ENCODE measurements at regions of chr5 and their contacts with region 1.

Region 1: GRCh38 chr5:140244525-140245025 is 58.3 kb downstream of the PFDN1 start:
- DNase-seq: peak; percentile 72
- H3K4me3 Mint-ChIP-seq: peak overlapping the region; percentile 38
- H3K27ac Mint-ChIP-seq: no peak overlapping the region
- H3K4me1 Mint-ChIP-seq: peaks cover 42% of the 10 kb centered on the region
- H3K27me3 Mint-ChIP-seq: no peaks in the 10 kb centered on the region

Region 2: DNA sequence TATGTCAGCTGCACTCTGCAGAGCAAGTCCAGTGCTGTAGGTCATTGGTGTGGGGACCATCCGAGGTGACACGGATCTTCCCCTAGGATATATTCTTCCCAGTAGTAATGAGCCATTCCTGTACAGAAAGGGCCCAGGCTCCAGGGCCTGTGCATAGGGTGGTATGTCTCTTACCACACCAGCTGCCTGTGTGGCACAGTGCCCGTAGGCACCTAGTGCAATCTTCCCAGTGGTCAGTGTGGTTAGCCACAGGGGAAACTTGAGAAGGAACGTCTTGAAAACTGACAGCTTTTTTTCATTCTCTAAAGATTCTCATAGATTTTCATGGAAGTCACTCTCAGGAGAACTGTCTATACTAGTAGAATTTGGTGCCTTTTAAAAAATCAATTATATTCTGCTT is 29.7 kb before region 1 on chr5:
- intact Hi-C with region 1: no loop called
- DNase-seq: no peak
- H3K4me3 Mint-ChIP-seq: no peak overlapping the region
- H3K27ac Mint-ChIP-seq: no peak overlapping the region
- H3K4me1 Mint-ChIP-seq: peaks cover 12% of the 10 kb centered on the region
- H3K27me3 Mint-ChIP-seq: no peaks in the 10 kb centered on the region

Region 3: DNA sequence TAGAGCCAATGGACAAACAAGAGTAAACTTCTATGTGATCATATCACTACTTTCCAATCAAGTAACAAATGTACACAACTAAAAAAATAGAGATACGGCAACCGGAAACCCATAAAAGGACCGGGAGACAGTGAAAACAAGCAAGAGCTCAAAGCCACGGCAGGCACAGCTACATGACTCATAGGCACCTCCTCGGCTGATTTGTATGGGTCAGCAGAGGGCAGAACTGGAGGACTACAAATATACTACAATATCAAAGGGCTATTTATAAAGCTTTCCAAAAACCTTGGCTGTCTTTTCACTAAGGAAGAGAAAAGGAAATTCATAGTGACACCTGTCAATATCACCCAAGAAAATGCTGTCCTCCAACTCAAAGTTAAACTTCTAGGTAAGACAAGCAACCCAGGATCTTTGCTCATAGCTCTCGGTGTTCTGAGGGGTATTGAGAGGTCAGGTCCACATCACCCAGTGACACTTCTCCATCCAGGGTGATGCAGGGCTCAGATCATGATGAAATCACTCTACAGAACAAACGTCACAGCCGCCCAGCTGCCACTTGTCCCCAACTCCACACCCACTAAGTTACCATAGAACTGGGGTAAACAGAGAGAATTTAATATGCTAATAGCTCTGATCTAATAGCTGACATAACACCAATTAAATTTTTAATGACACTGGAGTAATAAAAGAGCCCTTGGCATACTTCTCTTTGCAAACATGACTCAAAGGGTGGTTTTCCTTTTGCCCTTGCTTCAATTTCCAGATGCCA is 17.0 kb after region 1 on chr5:
- intact Hi-C with region 1: no loop called
- DNase-seq: no peak
- H3K4me3 Mint-ChIP-seq: no peak overlapping the region
- H3K27ac Mint-ChIP-seq: no peak overlapping the region
- H3K4me1 Mint-ChIP-seq: peaks cover 40% of the 10 kb centered on the region
- H3K27me3 Mint-ChIP-seq: no peaks in the 10 kb centered on the region

Region 4: DNA sequence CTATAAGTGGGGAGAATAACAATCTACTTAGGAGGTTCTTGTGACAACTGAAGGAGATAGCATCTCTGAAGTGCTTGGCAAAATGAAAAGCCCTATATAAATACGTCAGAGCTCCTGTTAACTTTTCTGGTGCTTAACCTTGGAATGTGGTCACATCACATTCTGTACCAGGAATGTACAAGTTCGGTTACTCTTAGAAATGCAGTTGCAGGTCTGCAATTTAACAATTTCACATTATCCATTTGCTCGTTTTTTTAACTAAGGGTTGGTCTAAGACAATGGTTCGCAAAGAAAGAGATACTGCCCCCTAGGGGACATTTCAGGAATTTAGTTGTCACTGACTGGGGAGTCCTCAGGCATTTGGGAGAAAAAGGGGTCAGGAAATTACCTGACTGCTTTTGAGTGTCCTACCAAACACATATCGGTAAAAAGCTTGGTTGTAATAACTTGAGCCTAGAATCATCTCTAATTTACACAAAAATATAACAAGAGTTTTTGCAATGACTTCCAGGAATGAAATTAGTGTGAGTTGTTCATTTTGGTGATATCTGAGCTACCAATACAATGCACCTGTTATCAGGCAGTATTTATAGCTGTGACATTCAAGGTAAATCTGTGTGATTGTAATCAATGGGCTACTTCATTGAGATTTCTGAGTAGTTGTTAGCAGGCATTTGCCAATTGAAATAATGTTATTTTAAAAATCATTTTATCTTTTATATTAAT is 107.2 kb after region 1 on chr5:
- intact Hi-C with region 1: loop called (anchors 1 kb)
- DNase-seq: peak; percentile 67
- H3K4me3 Mint-ChIP-seq: peak overlapping the region; percentile 21
- H3K27ac Mint-ChIP-seq: no peak overlapping the region
- H3K4me1 Mint-ChIP-seq: peaks cover 49% of the 10 kb centered on the region
- H3K27me3 Mint-ChIP-seq: peaks cover 5% of the 10 kb centered on the region

Region 5: GRCh38 chr5:140357726-140358093 is 113.1 kb after region 1 on chr5:
- intact Hi-C with region 1: loop called (anchors 1 kb)
- DNase-seq: peak; percentile 71
- H3K4me3 Mint-ChIP-seq: peak overlapping the region; percentile 74
- H3K27ac Mint-ChIP-seq: no peak overlapping the region
- H3K4me1 Mint-ChIP-seq: peaks cover 17% of the 10 kb centered on the region
- H3K27me3 Mint-ChIP-seq: peaks cover 4% of the 10 kb centered on the region

Region 6: DNA sequence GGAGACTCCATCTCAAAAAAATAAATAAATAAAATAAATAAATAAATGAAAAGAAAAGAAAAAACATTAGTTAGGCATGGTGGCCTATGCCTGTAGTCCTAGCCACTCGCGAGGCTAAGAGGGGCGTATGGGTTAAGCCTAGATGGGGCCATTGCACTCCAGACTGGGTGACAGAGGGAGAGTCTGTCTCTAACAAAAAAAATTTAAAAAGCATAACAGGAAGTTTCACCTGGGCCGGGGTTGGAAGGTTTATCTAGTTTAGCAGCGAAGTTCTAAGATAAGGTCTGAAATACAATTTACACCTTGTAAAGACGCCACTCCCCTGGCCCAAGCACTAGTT is 473.6 kb after region 1 on chr5:
- intact Hi-C with region 1: loop called (anchors 1 kb)
- DNase-seq: no peak
- H3K4me3 Mint-ChIP-seq: peak overlapping the region; percentile 13
- H3K27ac Mint-ChIP-seq: no peak overlapping the region
- H3K4me1 Mint-ChIP-seq: peaks cover 6% of the 10 kb centered on the region
- H3K27me3 Mint-ChIP-seq: peaks cover 14% of the 10 kb centered on the region